ENCODE measurements at regions of chr10 and their contacts with region 1.

Region 1: DNA sequence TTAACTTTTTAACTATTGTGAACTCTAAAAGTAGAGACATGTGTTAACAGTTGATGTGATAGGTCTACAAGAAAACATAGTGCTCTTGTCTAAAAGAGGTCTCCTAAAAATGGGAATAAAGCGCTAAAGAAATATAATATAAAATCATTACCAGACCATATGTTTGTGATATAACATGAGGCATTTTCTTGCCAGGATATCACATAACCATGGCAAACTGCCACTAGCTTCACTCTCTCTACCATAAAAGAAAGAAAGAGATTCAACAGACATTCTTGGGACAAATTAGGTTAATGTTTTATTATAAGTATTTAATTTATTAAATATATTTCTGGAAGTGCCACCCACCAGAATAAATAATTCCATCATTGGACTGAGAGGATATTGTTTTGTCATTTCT is 115.0 kb downstream of the TMEM26 start:
- DNase-seq: no peak
- H3K4me3 ChIP-seq: no peak overlapping the region
- H3K27ac ChIP-seq: no peak overlapping the region
- H3K4me1 ChIP-seq: no peaks in the 10 kb centered on the region
- H3K27me3 ChIP-seq: no peaks in the 10 kb centered on the region
- CTCF ChIP-seq: no peak

Region 2: DNA sequence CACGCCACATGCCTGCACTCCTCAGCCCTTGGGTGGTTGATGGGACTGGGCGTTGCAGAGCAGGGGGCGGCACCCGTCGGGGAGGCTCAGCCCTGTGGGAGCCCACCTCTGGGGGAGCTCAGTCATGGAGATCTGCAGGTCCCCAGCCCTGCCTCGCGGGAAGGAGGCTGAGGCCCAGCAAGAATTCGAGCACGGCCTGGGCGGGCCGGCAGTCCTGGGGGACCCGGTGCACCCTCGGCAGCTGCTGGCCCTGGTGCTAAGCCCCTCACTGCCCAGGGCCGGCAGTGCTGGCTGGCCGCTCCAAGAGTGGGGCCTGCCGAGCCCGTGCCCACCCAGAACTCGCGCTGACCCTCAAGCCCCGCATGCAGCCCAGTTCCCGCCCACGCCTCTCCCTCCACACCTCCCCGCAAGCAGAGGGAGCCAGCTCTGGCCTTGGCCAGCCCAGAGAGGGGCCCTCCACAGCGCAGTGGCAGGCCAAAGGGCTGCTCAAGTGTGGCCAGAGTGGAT is 38.8 kb after region 1 on chr10:
- CTCF ChIA-PET with region 1: no interaction called
- dilution Hi-C with region 1: loop called (anchors 5 kb)
- in situ Hi-C with region 1: no loop called
- intact Hi-C with region 1: no loop called
- DNase-seq: no peak
- H3K4me3 ChIP-seq: no peak overlapping the region
- H3K27ac ChIP-seq: no peak overlapping the region
- H3K4me1 ChIP-seq: no peaks in the 10 kb centered on the region
- H3K27me3 ChIP-seq: no peaks in the 10 kb centered on the region
- CTCF ChIP-seq: no peak